Endothelial cell of umbilical vein (primary cell): ENCODE measurements at regions of chr16 and their contacts with region 1.

Region 1: DNA sequence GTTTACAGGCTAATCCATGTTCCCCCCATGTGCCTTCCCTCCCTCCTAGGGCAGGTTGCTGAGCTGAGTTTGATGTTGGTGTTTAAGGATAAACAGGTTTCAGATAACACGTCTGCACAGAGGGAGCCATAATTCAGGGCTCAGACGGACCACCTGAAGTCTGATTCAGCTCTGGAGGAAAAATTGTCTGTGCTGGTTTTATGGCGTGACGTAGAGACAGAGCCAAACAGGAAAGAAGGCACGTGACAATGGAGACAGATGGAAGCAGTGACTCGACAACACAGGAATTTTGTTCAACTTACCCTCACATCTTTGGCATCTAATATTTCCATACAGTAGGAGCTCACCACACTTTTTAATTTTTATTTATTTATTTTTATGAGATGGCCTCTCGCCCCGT is 10.7 kb upstream of the USP10 start:
- DNase-seq: peak; percentile 83
- H3K4me3 ChIP-seq: no peak overlapping the region
- H3K27ac ChIP-seq: peak overlapping the region; percentile 69
- H3K4me1 ChIP-seq: peaks cover 14% of the 10 kb centered on the region
- H3K27me3 ChIP-seq: no peaks in the 10 kb centered on the region
- CTCF ChIP-seq: no peak
- POLR2A ChIP-seq: no peak

Region 2: DNA sequence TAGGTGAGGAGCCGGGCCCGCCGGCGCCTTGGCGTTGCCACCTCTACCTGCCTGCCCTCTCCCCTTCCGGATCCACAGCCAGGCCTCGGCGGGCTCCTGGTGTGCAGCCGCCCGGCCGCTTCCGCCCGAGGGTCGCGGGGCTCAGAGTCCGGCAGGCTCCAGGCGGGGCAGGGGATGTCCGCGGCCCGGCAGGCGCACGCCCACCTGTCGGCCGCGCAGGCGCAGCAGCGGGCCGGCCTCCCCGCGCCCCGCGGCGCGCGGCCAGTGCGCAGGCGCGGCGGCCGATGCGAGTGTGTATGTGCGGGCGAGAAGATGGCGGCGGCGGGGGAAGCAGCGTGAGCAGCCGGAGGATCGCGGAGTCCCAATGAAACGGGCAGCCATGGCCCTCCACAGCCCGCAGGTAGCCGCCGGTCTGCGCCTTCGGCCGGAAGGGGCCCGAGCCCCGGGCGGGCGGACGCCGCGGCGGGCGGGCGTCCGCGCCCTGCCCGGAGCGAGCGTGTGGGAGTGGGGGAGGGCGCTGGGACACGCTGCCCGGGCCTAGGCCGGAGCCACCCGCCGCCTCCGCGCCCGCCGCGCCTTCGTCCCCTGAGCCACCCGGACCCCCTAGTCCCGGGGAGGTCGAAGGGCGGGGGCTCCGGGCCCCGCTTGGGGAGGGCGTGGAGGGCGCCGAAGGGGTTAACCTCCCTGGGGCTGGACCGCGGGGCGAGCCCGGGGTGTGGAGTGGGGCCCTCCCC is 10.8 kb after region 1 on chr16 and contains the start of gene USP10:
- CTCF ChIA-PET with region 1: interaction called, 4 read pairs
- POLR2A ChIA-PET with region 1: no interaction called
- dilution Hi-C with region 1: no loop called
- intact Hi-C with region 1: loop called (anchors 1 kb)
- DNase-seq: peak; percentile 77
- H3K4me3 ChIP-seq: peak within 1 kb of the TSS; percentile 77 to 97 (median 93)
- H3K27ac ChIP-seq: peak within 1 kb of the TSS; percentile 69
- H3K4me1 ChIP-seq: peaks cover 14% of the 10 kb centered on the region
- H3K27me3 ChIP-seq: no peaks in the 10 kb centered on the region
- CTCF ChIP-seq: no peak
- POLR2A ChIP-seq: no peak
- total RNA-seq, gene USP10: 97.4 and 115 TPM in 2 replicates

Region 3: GRCh38 chr16:84754353-84754856 is 65.3 kb after region 1 on chr16:
- CTCF ChIA-PET with region 1: no interaction called
- POLR2A ChIA-PET with region 1: no interaction called
- dilution Hi-C with region 1: no loop called
- intact Hi-C with region 1: no loop called
- DNase-seq: peak; percentile 89
- H3K4me3 ChIP-seq: no peak overlapping the region
- H3K27ac ChIP-seq: no peak overlapping the region
- H3K4me1 ChIP-seq: peaks cover 20% of the 10 kb centered on the region
- H3K27me3 ChIP-seq: no peaks in the 10 kb centered on the region
- CTCF ChIP-seq: peak; percentile 64 to 70
- POLR2A ChIP-seq: no peak

Region 4: GRCh38 chr16:84933774-84934631 is 244.9 kb after region 1 on chr16:
- CTCF ChIA-PET with region 1: no interaction called
- POLR2A ChIA-PET with region 1: no interaction called
- dilution Hi-C with region 1: no loop called
- intact Hi-C with region 1: no loop called
- DNase-seq: no peak
- H3K4me3 ChIP-seq: no peak overlapping the region
- H3K27ac ChIP-seq: no peak overlapping the region
- H3K4me1 ChIP-seq: peaks cover 4% of the 10 kb centered on the region
- H3K27me3 ChIP-seq: no peaks in the 10 kb centered on the region
- CTCF ChIP-seq: no peak
- POLR2A ChIP-seq: no peak

Region 5: GRCh38 chr16:84970447-84971127 is 281.5 kb after region 1 on chr16:
- CTCF ChIA-PET with region 1: no interaction called
- POLR2A ChIA-PET with region 1: no interaction called
- dilution Hi-C with region 1: no loop called
- intact Hi-C with region 1: no loop called
- DNase-seq: peak; percentile 70
- H3K4me3 ChIP-seq: no peak overlapping the region
- H3K27ac ChIP-seq: no peak overlapping the region
- H3K4me1 ChIP-seq: no peaks in the 10 kb centered on the region
- H3K27me3 ChIP-seq: no peaks in the 10 kb centered on the region
- CTCF ChIP-seq: peak; percentile 86 to 90
- POLR2A ChIP-seq: no peak